Activated CD4-positive, alpha-beta T cell treated with anti-CD3 and anti-CD28 coated beads for 36 hours (primary cell): ENCODE measurements at regions of chr5 and their contacts with region 1.

Region 1: GRCh38 chr5:112772124-112772523 is 34.4 kb downstream of the APC start:
- DNase-seq: no peak
- ATAC-seq: peak; percentile 91
- H3K4me3 Mint-ChIP-seq: no peak overlapping the region
- H3K27ac Mint-ChIP-seq: no peak overlapping the region
- H3K4me1 Mint-ChIP-seq: no peaks in the 10 kb centered on the region
- H3K27me3 Mint-ChIP-seq: no peaks in the 10 kb centered on the region

Region 2: GRCh38 chr5:112757468-112758208 is 14.5 kb before region 1 on chr5:
- CTCF ChIA-PET with region 1: interaction called, 22 read pairs
- POLR2A ChIA-PET with region 1: no interaction called
- intact Hi-C with region 1: no loop called
- DNase-seq: no peak
- ATAC-seq: peak; percentile 74
- H3K4me3 Mint-ChIP-seq: no peak overlapping the region
- H3K27ac Mint-ChIP-seq: peak overlapping the region; percentile 51
- H3K4me1 Mint-ChIP-seq: peaks cover 2% of the 10 kb centered on the region
- H3K27me3 Mint-ChIP-seq: no peaks in the 10 kb centered on the region

Region 3: GRCh38 chr5:112800891-112801290 is 28.8 kb after region 1 on chr5:
- CTCF ChIA-PET with region 1: no interaction called
- POLR2A ChIA-PET with region 1: no interaction called
- intact Hi-C with region 1: loop called in 1 of 2 experiments (anchors 2 kb)
- DNase-seq: no peak
- ATAC-seq: no peak
- H3K4me3 Mint-ChIP-seq: no peak overlapping the region
- H3K27ac Mint-ChIP-seq: no peak overlapping the region
- H3K4me1 Mint-ChIP-seq: peaks cover 3% of the 10 kb centered on the region
- H3K27me3 Mint-ChIP-seq: no peaks in the 10 kb centered on the region